HCT116 (cell line): ENCODE measurements at regions of chr5 and their contacts with region 1.

Region 1: GRCh38 chr5:157109744-157110143 is 900 bp upstream of the HAVCR2 start:
- DNase-seq: no peak
- ATAC-seq: no peak
- H3K4me3 ChIP-seq: no peak overlapping the region
- H3K27ac ChIP-seq: no peak overlapping the region
- H3K4me1 ChIP-seq: no peaks in the 10 kb centered on the region
- H3K27me3 ChIP-seq: no peaks in the 10 kb centered on the region
- CTCF ChIP-seq: no peak
- POLR2A ChIP-seq: no peak
- RAD21 ChIP-seq: no peak

Region 2: DNA sequence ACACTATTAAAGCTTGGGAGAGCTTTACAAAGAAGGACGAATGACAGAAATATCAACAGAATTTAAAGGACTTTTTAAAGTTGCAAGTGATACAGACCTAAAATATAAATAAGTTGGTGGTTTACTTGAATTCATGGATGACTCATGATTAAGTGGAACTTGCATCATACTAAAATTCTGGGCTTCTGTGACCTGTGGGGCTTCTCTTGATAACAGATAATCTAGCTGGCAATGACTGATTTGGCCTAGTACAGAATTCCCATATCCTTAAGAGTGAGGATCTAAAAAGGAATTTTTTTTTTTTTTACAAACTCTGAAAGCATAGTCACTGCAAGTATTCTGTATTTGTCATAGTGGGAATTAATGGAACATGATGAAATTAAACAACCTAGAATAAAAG is 1326.5 kb before region 1 on chr5:
- CTCF ChIA-PET with region 1: no interaction called
- POLR2A ChIA-PET with region 1: no interaction called
- RAD21 ChIA-PET with region 1: no interaction called
- intact Hi-C with region 1: no loop called
- DNase-seq: no peak
- ATAC-seq: no peak
- H3K4me3 ChIP-seq: no peak overlapping the region
- H3K27ac ChIP-seq: no peak overlapping the region
- H3K4me1 ChIP-seq: no peaks in the 10 kb centered on the region
- H3K27me3 ChIP-seq: no peaks in the 10 kb centered on the region
- CTCF ChIP-seq: no peak
- POLR2A ChIP-seq: no peak
- RAD21 ChIP-seq: no peak

Region 3: DNA sequence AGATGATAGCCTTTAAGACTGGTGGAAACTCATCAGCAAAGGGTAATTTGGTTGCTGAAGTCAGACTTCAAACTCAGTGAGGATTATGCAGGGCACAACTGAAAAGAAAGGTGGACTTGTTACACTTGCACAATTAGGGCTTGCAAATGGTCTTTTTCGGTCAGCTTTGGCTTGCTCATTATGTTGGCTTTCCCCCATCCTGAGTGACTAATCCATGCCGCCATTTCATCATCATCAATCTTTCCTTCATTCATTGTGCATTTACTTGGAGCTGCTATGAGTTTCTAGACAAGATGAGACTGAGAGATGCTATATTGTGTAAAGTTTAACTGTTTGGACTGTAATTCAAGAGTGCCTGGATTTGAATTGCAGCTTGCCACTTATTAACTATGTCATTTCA is 394.5 kb before region 1 on chr5:
- CTCF ChIA-PET with region 1: no interaction called
- POLR2A ChIA-PET with region 1: no interaction called
- RAD21 ChIA-PET with region 1: no interaction called
- intact Hi-C with region 1: no loop called
- DNase-seq: no peak
- ATAC-seq: no peak
- H3K4me3 ChIP-seq: no peak overlapping the region
- H3K27ac ChIP-seq: no peak overlapping the region
- H3K4me1 ChIP-seq: no peaks in the 10 kb centered on the region
- H3K27me3 ChIP-seq: no peaks in the 10 kb centered on the region
- CTCF ChIP-seq: no peak
- POLR2A ChIP-seq: no peak
- RAD21 ChIP-seq: no peak

Region 4: DNA sequence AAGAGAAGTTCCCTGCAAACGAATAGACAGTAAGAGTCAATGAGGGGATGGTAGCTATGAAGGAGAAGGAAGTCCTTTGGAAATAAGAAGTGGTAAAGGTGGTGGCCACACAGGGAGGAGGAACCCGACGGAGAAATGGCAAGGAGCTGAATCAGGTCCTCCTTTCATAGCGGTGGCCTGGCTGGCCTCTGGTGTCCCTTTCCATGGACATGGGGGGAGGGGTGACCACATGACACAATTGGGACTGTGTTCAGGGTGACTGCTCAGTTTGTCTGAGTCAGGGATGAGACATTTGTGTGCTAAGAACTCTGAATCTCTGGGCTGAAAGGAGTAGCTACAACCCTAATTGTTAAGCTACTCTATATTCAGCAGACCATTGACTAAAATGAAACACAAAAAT is 118.0 kb before region 1 on chr5:
- CTCF ChIA-PET with region 1: no interaction called
- POLR2A ChIA-PET with region 1: no interaction called
- RAD21 ChIA-PET with region 1: no interaction called
- intact Hi-C with region 1: loop called (anchors 5 kb)
- DNase-seq: peak; percentile 10
- ATAC-seq: peak; percentile 20; the same call in 1 of the 2 replicates
- H3K4me3 ChIP-seq: no peak overlapping the region
- H3K27ac ChIP-seq: no peak overlapping the region
- H3K4me1 ChIP-seq: no peaks in the 10 kb centered on the region
- H3K27me3 ChIP-seq: 0 out of 2 replicates have a peak, but pooled peaks cover 5% of the 10 kb centered on the region
- CTCF ChIP-seq: no peak
- POLR2A ChIP-seq: no peak
- RAD21 ChIP-seq: no peak